ENCODE measurements at regions of chr20 and their contacts with region 1.

Region 1: DNA sequence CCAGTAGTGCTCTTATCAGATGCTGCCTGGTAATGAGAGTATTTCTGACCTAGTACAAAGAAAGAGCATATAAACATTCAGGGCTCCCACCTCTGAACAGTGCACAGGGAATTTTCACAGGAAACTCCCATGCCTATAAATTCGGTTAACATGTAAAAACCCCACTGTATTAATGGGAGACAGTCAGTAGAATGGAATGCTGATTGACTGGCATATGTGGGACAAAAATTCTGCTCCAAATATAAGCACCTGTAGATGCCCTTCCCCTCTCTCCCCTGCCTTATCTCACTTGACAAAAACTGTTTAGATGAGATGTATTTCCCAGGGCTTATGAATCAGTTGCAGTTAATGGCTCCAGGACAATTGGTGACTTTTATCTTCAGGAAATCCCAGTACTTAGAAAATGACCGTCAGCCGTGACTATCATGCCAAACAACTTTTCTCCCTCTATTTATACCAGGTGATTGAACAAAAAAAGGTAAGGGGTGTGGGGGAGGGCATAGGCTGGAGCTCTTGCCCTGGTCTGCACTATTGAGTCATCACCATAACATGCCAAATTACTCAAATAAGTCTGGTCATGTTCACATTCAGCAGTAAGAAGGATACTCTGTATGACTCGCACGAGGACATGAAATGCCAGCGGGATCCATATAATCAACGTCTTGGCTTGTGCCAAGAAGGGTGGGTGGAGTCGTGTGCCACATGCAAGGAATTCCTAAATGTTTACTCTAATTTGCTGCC is 176.4 kb upstream of the BMP2 start:
- DNase-seq: no peak
- ATAC-seq: no peak
- H3K4me3 ChIP-seq: no peak overlapping the region
- H3K27ac ChIP-seq: no peak overlapping the region
- H3K4me1 ChIP-seq: no peaks in the 10 kb centered on the region
- CTCF ChIP-seq: no peak
- EP300 ChIP-seq: no peak
- POLR2A ChIP-seq: no peak
- RAD21 ChIP-seq: no peak

Region 2: GRCh38 chr20:5996765-5997164 is 594.3 kb before region 1 on chr20:
- CTCF ChIA-PET with region 1: no interaction called
- POLR2A ChIA-PET with region 1: no interaction called
- DNase-seq: peak in 1 of 2 experiments; percentile 35
- ATAC-seq: peak; percentile 59 to 76; a peak in 5 of 6 replicates
- H3K4me3 ChIP-seq: no peak overlapping the region
- H3K27ac ChIP-seq: no peak overlapping the region
- H3K4me1 ChIP-seq: peaks cover 6% of the 10 kb centered on the region
- CTCF ChIP-seq: no peak
- EP300 ChIP-seq: no peak
- POLR2A ChIP-seq: no peak
- RAD21 ChIP-seq: no peak

Region 3: DNA sequence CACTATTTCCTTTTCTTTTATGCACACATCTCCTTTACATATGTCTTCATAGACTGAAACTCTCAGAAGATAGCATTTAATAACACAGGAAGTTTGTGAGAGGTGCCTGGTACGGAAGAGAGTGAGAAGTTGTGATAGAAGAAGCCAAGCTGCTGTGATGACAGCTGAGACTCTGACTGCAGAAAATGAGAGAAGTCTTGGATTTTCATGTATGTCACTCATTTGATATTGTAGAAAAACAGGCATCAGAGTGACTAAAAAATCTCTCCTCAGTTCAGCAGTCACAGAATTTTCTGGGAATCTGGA is 21.5 kb after region 1 on chr20:
- CTCF ChIA-PET with region 1: no interaction called
- POLR2A ChIA-PET with region 1: interaction called, 10 read pairs
- DNase-seq: no peak
- ATAC-seq: no peak
- H3K4me3 ChIP-seq: no peak overlapping the region
- H3K27ac ChIP-seq: no peak overlapping the region
- H3K4me1 ChIP-seq: no peaks in the 10 kb centered on the region
- CTCF ChIP-seq: no peak
- EP300 ChIP-seq: no peak
- POLR2A ChIP-seq: no peak
- RAD21 ChIP-seq: no peak

Region 4: DNA sequence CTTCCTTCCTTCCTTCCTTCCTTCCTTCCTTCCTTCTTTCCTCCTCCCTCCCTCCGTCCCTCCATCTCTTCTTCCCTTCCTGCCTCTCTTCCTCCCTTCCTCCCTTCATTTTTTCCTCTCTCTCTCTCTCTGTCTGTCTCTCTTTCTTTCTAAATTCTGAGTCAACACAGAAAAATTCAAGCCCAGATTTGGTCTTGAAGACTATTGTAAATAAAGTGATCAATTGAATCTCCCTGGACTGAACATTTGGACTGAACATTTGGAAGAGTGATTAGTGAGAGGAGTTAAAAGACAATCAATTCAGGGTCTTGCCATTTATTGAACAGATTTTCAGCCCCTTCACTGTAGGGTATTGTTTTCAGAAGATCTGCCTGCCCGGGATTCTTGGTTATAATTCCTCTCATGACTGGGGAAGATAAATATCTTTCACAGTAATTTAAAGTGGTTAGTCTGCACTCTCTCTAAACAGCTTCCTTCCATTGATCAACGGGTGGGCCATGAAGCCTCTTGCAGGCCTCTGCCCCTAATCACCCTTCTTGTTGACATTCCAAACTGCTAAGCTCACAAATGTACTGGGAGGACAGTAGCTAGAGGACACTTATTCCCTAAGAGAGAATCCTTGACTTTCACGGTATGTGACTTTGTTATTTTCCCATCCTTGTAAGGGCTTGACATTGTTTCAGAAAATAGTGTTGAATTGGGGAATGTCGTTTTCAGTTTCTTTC is 74.7 kb after region 1 on chr20:
- CTCF ChIA-PET with region 1: no interaction called
- POLR2A ChIA-PET with region 1: no interaction called
- DNase-seq: no peak
- ATAC-seq: no peak
- H3K4me3 ChIP-seq: no peak overlapping the region
- H3K27ac ChIP-seq: no peak overlapping the region
- H3K4me1 ChIP-seq: no peaks in the 10 kb centered on the region
- CTCF ChIP-seq: no peak
- EP300 ChIP-seq: no peak
- POLR2A ChIP-seq: no peak
- RAD21 ChIP-seq: no peak